A673 (cell line): ENCODE measurements at regions of chr2 and their contacts with region 1.

Region 1: GRCh38 chr2:235779444-235779896 is 285.6 kb downstream of the AGAP1 start:
- DNase-seq: peak; percentile 68
- H3K4me3 ChIP-seq: no peak overlapping the region
- H3K27ac ChIP-seq: no peak overlapping the region
- H3K4me1 ChIP-seq: no peaks in the 10 kb centered on the region
- H3K27me3 ChIP-seq: no peaks in the 10 kb centered on the region
- CTCF ChIP-seq: peak; percentile 90

Region 2: GRCh38 chr2:235358981-235359471 is 420.4 kb before region 1 on chr2:
- CTCF ChIA-PET with region 1: no interaction called
- POLR2A ChIA-PET with region 1: interaction called, 12 read pairs
- intact Hi-C with region 1: no loop called
- DNase-seq: no peak
- H3K4me3 ChIP-seq: no peak overlapping the region
- H3K27ac ChIP-seq: no peak overlapping the region
- H3K4me1 ChIP-seq: no peaks in the 10 kb centered on the region
- H3K27me3 ChIP-seq: no peaks in the 10 kb centered on the region
- CTCF ChIP-seq: no peak

Region 3: GRCh38 chr2:236236559-236237452 is 457.3 kb after region 1 on chr2:
- CTCF ChIA-PET with region 1: no interaction called
- POLR2A ChIA-PET with region 1: no interaction called
- intact Hi-C with region 1: no loop called
- DNase-seq: no peak
- H3K4me3 ChIP-seq: no peak overlapping the region
- H3K27ac ChIP-seq: no peak overlapping the region
- H3K4me1 ChIP-seq: no peaks in the 10 kb centered on the region
- H3K27me3 ChIP-seq: peaks cover 92% of the 10 kb centered on the region
- CTCF ChIP-seq: no peak

Region 4: DNA sequence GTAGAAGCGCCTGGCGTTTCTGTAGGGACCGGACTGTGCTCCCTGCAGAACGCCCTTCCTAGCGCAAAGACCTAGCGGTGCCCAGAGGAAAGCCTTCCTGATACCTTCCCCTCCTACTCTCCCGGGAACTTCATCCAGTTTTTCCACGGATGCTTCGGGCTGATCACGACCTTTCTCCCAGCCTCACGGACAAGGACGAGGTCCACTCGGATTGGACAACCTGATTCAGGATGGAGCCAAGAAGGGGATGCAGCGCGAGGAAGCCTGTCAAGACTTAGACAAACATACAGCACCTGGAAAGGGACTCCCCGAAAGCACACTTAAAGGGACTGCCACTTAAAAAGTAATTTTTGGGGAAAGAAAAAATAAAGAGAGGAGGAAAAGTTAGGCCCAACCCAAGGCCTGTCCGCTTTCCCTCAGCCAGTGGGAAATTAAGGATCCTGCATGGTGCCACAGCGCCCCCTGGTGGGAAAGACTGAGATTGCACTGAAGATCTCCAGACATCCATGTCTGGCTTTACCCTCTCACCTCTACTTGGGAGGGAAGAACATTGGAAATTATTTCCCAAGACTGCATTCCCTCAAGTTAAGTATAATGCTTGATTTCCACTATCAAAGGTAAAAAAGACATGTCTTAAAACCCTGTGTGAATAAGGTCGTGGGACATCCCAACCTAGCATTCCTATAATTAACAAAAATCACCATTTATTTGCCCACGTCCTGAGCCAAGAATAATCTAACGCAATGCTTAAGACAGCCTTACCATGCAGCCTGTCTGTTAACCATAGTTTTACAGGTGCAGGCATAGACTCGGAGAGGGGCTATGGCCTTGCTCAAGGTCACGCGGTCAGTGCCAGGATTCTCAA is 1292.8 kb after region 1 on chr2:
- CTCF ChIA-PET with region 1: no interaction called
- POLR2A ChIA-PET with region 1: no interaction called
- intact Hi-C with region 1: loop called (anchors 5 kb)
- DNase-seq: peak; percentile 75
- H3K4me3 ChIP-seq: no peak overlapping the region
- H3K27ac ChIP-seq: no peak overlapping the region
- H3K4me1 ChIP-seq: no peaks in the 10 kb centered on the region
- H3K27me3 ChIP-seq: peaks cover 4% of the 10 kb centered on the region
- CTCF ChIP-seq: peak; percentile 94